K562 (cell line): ENCODE measurements at regions of chrX and their contacts with region 1.

Region 1: DNA sequence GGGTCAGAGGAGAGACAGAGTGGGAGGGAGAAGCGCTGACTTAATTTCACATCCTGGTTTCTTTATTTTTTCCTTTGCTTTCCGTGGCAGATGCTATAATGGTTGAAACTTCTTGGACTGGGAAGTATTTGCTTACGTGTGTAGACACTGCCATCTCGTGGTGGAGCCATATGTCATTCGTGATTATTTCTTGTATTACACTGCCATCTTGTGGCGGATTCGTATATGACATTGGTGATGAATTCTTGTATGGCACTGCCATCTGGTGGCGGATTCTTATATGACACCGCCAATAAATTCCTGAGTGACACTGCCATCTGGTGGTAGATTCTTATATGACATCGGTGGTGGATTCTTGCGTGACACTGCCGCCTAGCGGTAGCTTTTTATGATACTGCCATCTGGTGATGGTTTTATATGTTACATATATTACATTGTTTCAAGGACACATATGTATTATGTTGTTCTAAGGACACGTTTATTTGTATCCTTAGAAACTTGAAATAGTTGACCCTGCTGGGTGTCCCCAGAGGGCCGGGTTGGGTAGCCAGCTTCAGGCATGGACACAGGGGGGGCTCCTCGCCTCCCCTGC is 37.3 kb upstream of the CLCN4 start:
- DNase-seq: peak; percentile 49 to 80 (median 56)
- ATAC-seq: peak; percentile 47; the same call in 1 of the 3 replicates
- H3K4me3 ChIP-seq: no peak overlapping the region
- H3K27ac ChIP-seq: no peak overlapping the region
- H3K4me1 ChIP-seq: no peaks in the 10 kb centered on the region
- H3K27me3 ChIP-seq: peaks cover 0 to 5% of the 10 kb centered on the region in 2 experiments; a peak in 2 of 5 replicates
- CTCF ChIP-seq: peak; percentile 99 to 100 (median 100)
- EP300 ChIP-seq: peak; percentile 69; the same call in 1 of the 2 replicates
- POLR2A ChIP-seq: no peak
- RAD21 ChIP-seq: peak; percentile 100

Region 2: GRCh38 chrX:8743126-8743732 is 1376.3 kb before region 1 on chrX:
- CTCF ChIA-PET with region 1: interaction called, 56 read pairs
- POLR2A ChIA-PET with region 1: no interaction called
- in situ Hi-C with region 1: no loop called
- intact Hi-C with region 1: loop called (anchors 1 kb)
- DNase-seq: peak; percentile 40 to 62 (median 58)
- ATAC-seq: peak; percentile 75
- H3K4me3 ChIP-seq: no peak overlapping the region
- H3K27ac ChIP-seq: no peak overlapping the region
- H3K4me1 ChIP-seq: no peaks in the 10 kb centered on the region
- H3K27me3 ChIP-seq: no peaks in the 10 kb centered on the region
- CTCF ChIP-seq: peak; percentile 64 to 72 (median 70)
- EP300 ChIP-seq: no peak
- POLR2A ChIP-seq: no peak
- RAD21 ChIP-seq: peak; percentile 33 to 59; a peak in 3 of 4 replicates

Region 3: GRCh38 chrX:8783100-8784098 is 1336.1 kb before region 1 on chrX:
- CTCF ChIA-PET with region 1: interaction called, 10 read pairs
- POLR2A ChIA-PET with region 1: no interaction called
- in situ Hi-C with region 1: no loop called
- intact Hi-C with region 1: no loop called
- DNase-seq: peak; percentile 22 to 52 (median 24)
- ATAC-seq: peak; percentile 92
- H3K4me3 ChIP-seq: no peak overlapping the region
- H3K27ac ChIP-seq: no peak overlapping the region
- H3K4me1 ChIP-seq: peaks cover 0 to 5% of the 10 kb centered on the region in 2 experiments; a peak in 2 of 5 replicates
- H3K27me3 ChIP-seq: no peaks in the 10 kb centered on the region; a peak in 1 of 5 replicates
- CTCF ChIP-seq: peak; percentile 59 to 74 (median 59)
- EP300 ChIP-seq: no peak
- POLR2A ChIP-seq: no peak
- RAD21 ChIP-seq: peak in 1 of 2 experiments; percentile 47; a peak in 3 of 4 replicates

Region 4: GRCh38 chrX:9873952-9874351 is 245.5 kb before region 1 on chrX:
- CTCF ChIA-PET with region 1: interaction called, 42 read pairs
- POLR2A ChIA-PET with region 1: no interaction called
- in situ Hi-C with region 1: loop called (anchors 25 kb)
- intact Hi-C with region 1: loop called (anchors 2 kb)
- DNase-seq: peak; percentile 25 to 47 (median 39)
- ATAC-seq: peak; percentile 86
- H3K4me3 ChIP-seq: no peak overlapping the region
- H3K27ac ChIP-seq: no peak overlapping the region
- H3K4me1 ChIP-seq: no peaks in the 10 kb centered on the region
- H3K27me3 ChIP-seq: peaks cover 2 to 16% of the 10 kb centered on the region in 2 experiments; a peak in 2 of 5 replicates
- CTCF ChIP-seq: peak; percentile 47 to 69 (median 49); a peak in 5 of 6 replicates
- EP300 ChIP-seq: no peak
- POLR2A ChIP-seq: no peak
- RAD21 ChIP-seq: peak in 1 of 2 experiments; percentile 52; a peak in 2 of 4 replicates

Region 5: DNA sequence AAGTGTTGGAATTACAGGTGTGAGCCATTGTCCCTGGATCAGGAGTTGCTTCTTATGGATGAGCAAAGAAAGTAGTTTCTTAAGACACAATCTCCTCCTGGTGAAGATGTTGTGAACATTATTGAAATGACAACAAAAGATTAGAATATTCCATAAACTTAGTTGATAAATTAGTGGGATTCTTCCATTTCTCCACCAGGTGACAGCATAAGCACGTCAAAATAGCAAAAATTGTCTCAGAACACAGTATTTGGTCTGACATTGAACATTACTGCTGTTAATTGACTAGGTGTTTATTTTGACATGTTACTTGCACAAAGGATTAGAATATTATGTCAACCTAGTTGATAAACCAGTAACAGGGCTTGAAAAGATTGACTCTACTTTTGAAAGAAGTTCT is 130.7 kb before region 1 on chrX:
- CTCF ChIA-PET with region 1: interaction called, 400 read pairs
- POLR2A ChIA-PET with region 1: no interaction called
- in situ Hi-C with region 1: no loop called
- intact Hi-C with region 1: loop called (anchors 1 kb)
- DNase-seq: peak in 1 of 4 experiments; percentile 1
- ATAC-seq: no peak
- H3K4me3 ChIP-seq: no peak overlapping the region
- H3K27ac ChIP-seq: no peak overlapping the region
- H3K4me1 ChIP-seq: no peaks in the 10 kb centered on the region
- H3K27me3 ChIP-seq: peaks cover 0 to 23% of the 10 kb centered on the region in 2 experiments; a peak in 2 of 5 replicates
- CTCF ChIP-seq: peak in 2 of 3 experiments; percentile 46 to 52; a peak in 3 of 6 replicates
- EP300 ChIP-seq: no peak
- POLR2A ChIP-seq: no peak
- RAD21 ChIP-seq: peak; percentile 32 to 63; a peak in 3 of 4 replicates

Region 6: GRCh38 chrX:10233173-10233572 is 113.7 kb after region 1 on chrX:
- CTCF ChIA-PET with region 1: no interaction called
- POLR2A ChIA-PET with region 1: no interaction called
- in situ Hi-C with region 1: no loop called
- intact Hi-C with region 1: no loop called
- DNase-seq: no peak
- ATAC-seq: no peak
- H3K4me3 ChIP-seq: no peak overlapping the region
- H3K27ac ChIP-seq: no peak overlapping the region
- H3K4me1 ChIP-seq: no peaks in the 10 kb centered on the region
- H3K27me3 ChIP-seq: no peaks in the 10 kb centered on the region; a peak in 1 of 5 replicates
- CTCF ChIP-seq: no peak
- EP300 ChIP-seq: no peak
- POLR2A ChIP-seq: no peak
- RAD21 ChIP-seq: no peak